Naive thymus-derived CD4-positive, alpha-beta T cell (primary cell): ENCODE measurements at regions of chr12 and their contacts with region 1.

Region 1: DNA sequence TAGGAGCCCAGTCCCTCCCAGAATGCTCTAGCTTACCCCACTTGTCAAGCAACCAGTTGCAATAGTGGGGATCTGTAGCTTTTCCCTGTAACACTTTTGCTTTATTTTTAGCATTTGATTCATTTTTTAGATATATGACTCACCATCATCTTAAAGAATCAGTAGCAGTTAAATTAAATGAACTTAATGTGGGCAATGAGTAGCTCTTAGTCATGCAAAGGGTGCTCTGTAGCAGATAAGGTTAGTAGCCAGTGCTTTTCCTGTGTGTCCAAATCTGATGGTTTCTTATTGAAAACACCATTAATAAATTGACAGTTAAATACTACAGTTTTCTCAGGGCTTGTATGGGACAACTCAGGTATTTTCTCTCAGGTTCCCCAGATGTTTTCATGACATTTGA is 311.8 kb downstream of the RERGL start:
- DNase-seq: no peak
- ATAC-seq: no peak
- H3K4me3 ChIP-seq: no peak overlapping the region
- H3K4me3 Mint-ChIP-seq: no peak overlapping the region
- H3K27ac ChIP-seq: no peak overlapping the region
- H3K27ac Mint-ChIP-seq: no peak overlapping the region
- H3K4me1 ChIP-seq: no peaks in the 10 kb centered on the region
- H3K4me1 Mint-ChIP-seq: no peaks in the 10 kb centered on the region
- H3K27me3 ChIP-seq: no peaks in the 10 kb centered on the region
- H3K27me3 Mint-ChIP-seq: no peaks in the 10 kb centered on the region

Region 2: GRCh38 chr12:17866802-17867201 is 88.6 kb after region 1 on chr12:
- CTCF ChIA-PET with region 1: no interaction called
- POLR2A ChIA-PET with region 1: no interaction called
- intact Hi-C with region 1: loop called in 1 of 2 experiments (anchors 2 kb)
- DNase-seq: no peak
- ATAC-seq: no peak
- H3K4me3 ChIP-seq: no peak overlapping the region
- H3K4me3 Mint-ChIP-seq: no peak overlapping the region
- H3K27ac ChIP-seq: no peak overlapping the region
- H3K27ac Mint-ChIP-seq: no peak overlapping the region
- H3K4me1 ChIP-seq: no peaks in the 10 kb centered on the region
- H3K4me1 Mint-ChIP-seq: no peaks in the 10 kb centered on the region
- H3K27me3 ChIP-seq: no peaks in the 10 kb centered on the region
- H3K27me3 Mint-ChIP-seq: no peaks in the 10 kb centered on the region